ENCODE measurements at regions of chr10 and their contacts with region 1.

Region 1: GRCh38 chr10:74766501-74766900 is 59.9 kb upstream of the KAT6B start:
- DNase-seq: no peak
- ATAC-seq: peak; percentile 56; the same call in 2 of the 3 replicates
- H3K4me3 ChIP-seq: peak overlapping the region in 1 of 3 experiments; percentile 6; a peak in 1 of 6 replicates
- H3K27ac ChIP-seq: no peak overlapping the region
- H3K4me1 ChIP-seq: peaks cover 36% of the 10 kb centered on the region
- H3K27me3 ChIP-seq: peaks cover 0 to 7% of the 10 kb centered on the region in 2 experiments; a peak in 1 of 5 replicates
- CTCF ChIP-seq: no peak
- EP300 ChIP-seq: no peak
- POLR2A ChIP-seq: no peak
- RAD21 ChIP-seq: no peak

Region 2: GRCh38 chr10:74826142-74827044 is 59.9 kb after region 1 on chr10 and contains the start of gene KAT6B:
- CTCF ChIA-PET with region 1: no interaction called
- POLR2A ChIA-PET with region 1: no interaction called
- in situ Hi-C with region 1: no loop called
- intact Hi-C with region 1: loop called (anchors 10 kb)
- DNase-seq: peak; percentile 100
- ATAC-seq: peak; percentile 91
- H3K4me3 ChIP-seq: peak within 1 kb of the TSS; percentile 88 to 98 (median 90)
- H3K27ac ChIP-seq: peak within 1 kb of the TSS; percentile 98
- H3K4me1 ChIP-seq: peaks cover 50% of the 10 kb centered on the region
- H3K27me3 ChIP-seq: no peaks in the 10 kb centered on the region
- CTCF ChIP-seq: peak; percentile 26; the same call in 1 of the 2 replicates
- EP300 ChIP-seq: no peak
- POLR2A ChIP-seq: peak; percentile 59 to 78; a peak in 3 of 4 replicates
- RAD21 ChIP-seq: peak; percentile 54
- total RNA-seq, gene KAT6B: 7.8 and 9.5 TPM in 2 replicates

Region 3: GRCh38 chr10:74882831-74883230 is 116.3 kb after region 1 on chr10:
- CTCF ChIA-PET with region 1: no interaction called
- POLR2A ChIA-PET with region 1: no interaction called
- in situ Hi-C with region 1: no loop called
- intact Hi-C with region 1: no loop called
- DNase-seq: no peak
- ATAC-seq: no peak
- H3K4me3 ChIP-seq: no peak overlapping the region
- H3K27ac ChIP-seq: no peak overlapping the region
- H3K4me1 ChIP-seq: peaks cover 24% of the 10 kb centered on the region
- H3K27me3 ChIP-seq: no peaks in the 10 kb centered on the region
- CTCF ChIP-seq: no peak
- EP300 ChIP-seq: no peak
- POLR2A ChIP-seq: no peak
- RAD21 ChIP-seq: no peak